ENCODE measurements at regions of chr6 and their contacts with region 1.

Region 1: GRCh38 chr6:158819213-158819909 is at the start of gene EZR:
- DNase-seq: peak; percentile 87
- ATAC-seq: peak; percentile 59
- H3K4me3 Mint-ChIP-seq: peak within 1 kb of the TSS; percentile 75
- H3K27ac Mint-ChIP-seq: peak within 1 kb of the TSS; percentile 91
- H3K4me1 Mint-ChIP-seq: peaks cover 40% of the 10 kb centered on the region
- H3K27me3 Mint-ChIP-seq: no peaks in the 10 kb centered on the region
- total RNA-seq, gene EZR: 177 to 180 TPM

Region 2: GRCh38 chr6:158460602-158461169 is 358.7 kb before region 1 on chr6:
- CTCF ChIA-PET with region 1: no interaction called
- POLR2A ChIA-PET with region 1: no interaction called
- DNase-seq: no peak
- ATAC-seq: no peak
- H3K4me3 Mint-ChIP-seq: no peak overlapping the region
- H3K27ac Mint-ChIP-seq: no peak overlapping the region
- H3K4me1 Mint-ChIP-seq: no peaks in the 10 kb centered on the region
- H3K27me3 Mint-ChIP-seq: no peaks in the 10 kb centered on the region

Region 3: DNA sequence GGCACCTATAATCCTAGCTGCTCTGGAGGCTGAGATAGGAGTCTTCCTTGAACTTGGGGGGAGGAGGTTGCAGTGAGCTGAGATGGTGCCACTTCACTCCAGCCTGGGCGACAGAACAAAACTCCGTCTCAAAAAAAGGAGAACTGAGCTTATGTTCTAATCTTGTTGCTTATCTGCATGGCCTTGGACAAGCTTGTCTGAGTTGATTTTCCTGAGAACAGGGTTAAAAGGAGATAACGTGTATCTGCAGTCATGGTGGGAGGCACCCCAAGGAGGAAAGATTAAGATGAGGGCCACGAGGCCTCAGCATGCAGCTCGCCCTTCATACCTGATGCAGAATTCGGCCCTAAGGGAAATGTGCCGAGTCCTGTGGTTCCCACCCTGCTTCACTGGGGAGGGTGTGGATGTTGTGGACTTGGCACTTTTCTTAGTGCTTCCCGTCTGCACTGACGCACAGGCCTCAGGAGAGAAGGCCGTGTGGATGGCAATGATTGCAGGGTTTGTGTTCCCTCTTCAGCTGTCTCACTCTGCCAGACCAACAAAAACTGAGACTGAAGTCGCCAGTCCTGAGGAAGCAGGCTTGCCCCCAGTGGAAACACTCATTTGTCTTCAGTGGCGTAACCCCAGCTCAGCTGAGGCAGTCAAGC is 56.5 kb before region 1 on chr6:
- CTCF ChIA-PET with region 1: no interaction called
- POLR2A ChIA-PET with region 1: no interaction called
- DNase-seq: no peak
- ATAC-seq: no peak
- H3K4me3 Mint-ChIP-seq: no peak overlapping the region
- H3K27ac Mint-ChIP-seq: peak overlapping the region; percentile 15
- H3K4me1 Mint-ChIP-seq: no peaks in the 10 kb centered on the region
- H3K27me3 Mint-ChIP-seq: no peaks in the 10 kb centered on the region

Region 4: GRCh38 chr6:158772851-158773371 is 46.5 kb before region 1 on chr6:
- CTCF ChIA-PET with region 1: no interaction called
- POLR2A ChIA-PET with region 1: no interaction called
- DNase-seq: no peak
- ATAC-seq: no peak
- H3K4me3 Mint-ChIP-seq: no peak overlapping the region
- H3K27ac Mint-ChIP-seq: peak overlapping the region; percentile 66
- H3K4me1 Mint-ChIP-seq: peaks cover 40% of the 10 kb centered on the region
- H3K27me3 Mint-ChIP-seq: no peaks in the 10 kb centered on the region

Region 5: DNA sequence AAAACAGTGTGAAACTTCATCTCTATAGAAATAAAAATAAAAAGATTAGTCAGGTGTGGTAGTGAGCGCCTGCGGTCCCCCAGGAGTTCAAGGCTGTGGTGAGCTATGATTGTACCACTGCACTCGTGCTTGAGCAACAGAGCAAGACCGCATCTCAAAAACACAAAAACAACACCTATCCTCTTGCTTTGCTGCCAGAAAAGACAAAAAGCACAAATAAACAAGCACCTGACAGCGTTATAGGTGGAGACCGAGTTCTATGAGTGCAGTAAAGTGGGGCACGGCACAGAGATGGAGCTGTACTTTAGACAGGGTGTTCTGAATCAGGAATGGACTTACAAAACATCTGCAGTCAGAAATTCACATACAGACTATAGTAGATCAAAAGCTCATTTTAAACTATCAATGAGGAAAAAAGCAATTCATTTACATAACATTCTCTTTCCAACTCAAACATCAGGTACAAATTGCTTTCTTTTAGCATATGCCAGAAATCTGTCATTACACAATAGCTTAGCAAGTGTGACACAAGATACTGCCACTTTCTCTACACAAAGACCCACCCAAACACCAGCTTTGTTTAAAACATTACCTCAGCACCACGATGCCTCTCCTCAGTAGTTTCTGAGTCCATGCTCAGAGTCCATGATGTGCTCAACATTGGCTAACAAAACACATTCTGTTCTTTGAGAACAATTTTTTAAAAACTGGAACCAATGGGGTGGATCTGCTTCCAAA is 10.3 kb before region 1 on chr6:
- CTCF ChIA-PET with region 1: interaction called, 4 read pairs
- POLR2A ChIA-PET with region 1: interaction called, 13 read pairs
- DNase-seq: no peak
- ATAC-seq: peak; percentile 26
- H3K4me3 Mint-ChIP-seq: peak overlapping the region; percentile 12
- H3K27ac Mint-ChIP-seq: peak overlapping the region; percentile 59
- H3K4me1 Mint-ChIP-seq: peaks cover 92% of the 10 kb centered on the region
- H3K27me3 Mint-ChIP-seq: no peaks in the 10 kb centered on the region

Region 6: DNA sequence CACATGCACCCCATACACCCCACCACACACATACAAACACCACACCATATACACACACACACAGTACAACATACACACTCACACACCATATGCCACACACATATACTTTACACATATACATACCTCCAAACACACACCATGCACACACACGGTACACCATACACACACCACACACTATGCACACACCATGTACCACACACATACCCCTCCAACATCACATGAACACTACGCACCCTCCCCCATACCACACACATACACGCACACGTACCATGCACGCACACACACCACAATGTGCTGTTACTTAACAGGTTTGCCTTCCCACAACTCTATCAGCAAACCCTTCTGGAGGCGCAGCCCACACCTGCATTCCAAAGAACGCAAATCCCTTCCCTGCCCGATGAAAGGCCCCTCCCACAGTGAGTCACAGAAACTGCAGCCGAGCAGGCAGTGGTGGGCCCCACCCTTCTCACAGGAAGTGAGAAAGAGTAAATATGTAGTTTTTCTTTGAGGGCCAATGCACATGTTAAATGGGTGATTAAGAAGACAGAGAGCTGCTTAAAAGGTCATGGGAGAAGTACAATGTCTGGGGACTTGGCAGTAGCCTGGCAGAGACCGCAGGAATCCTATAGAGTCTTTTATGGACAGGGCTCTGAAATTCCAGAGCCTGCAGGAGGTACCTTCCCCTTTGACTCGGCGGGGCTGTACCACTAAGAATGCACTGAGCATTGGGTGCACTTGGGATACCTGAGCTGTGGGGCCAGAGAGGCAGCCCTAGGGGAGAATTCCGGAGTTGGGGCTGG is 33.9 kb after region 1 on chr6:
- CTCF ChIA-PET with region 1: interaction called, 5 read pairs
- POLR2A ChIA-PET with region 1: interaction called, 13 read pairs
- DNase-seq: peak; percentile 90
- ATAC-seq: peak; percentile 76
- H3K4me3 Mint-ChIP-seq: no peak overlapping the region
- H3K27ac Mint-ChIP-seq: no peak overlapping the region
- H3K4me1 Mint-ChIP-seq: peaks cover 27% of the 10 kb centered on the region
- H3K27me3 Mint-ChIP-seq: no peaks in the 10 kb centered on the region